ENCODE measurements at regions of chr2 and their contacts with region 1.

Region 1: GRCh38 chr2:201231781-201232466 is 28.4 kb upstream of the CASP8 start:
- DNase-seq: peak; percentile 95
- ATAC-seq: peak; percentile 54
- H3K4me3 Mint-ChIP-seq: peak overlapping the region; percentile 91
- H3K27ac Mint-ChIP-seq: peak overlapping the region; percentile 88
- H3K4me1 Mint-ChIP-seq: peaks cover 46% of the 10 kb centered on the region
- H3K27me3 Mint-ChIP-seq: no peaks in the 10 kb centered on the region
- CTCF ChIP-seq: peak; percentile 93

Region 2: DNA sequence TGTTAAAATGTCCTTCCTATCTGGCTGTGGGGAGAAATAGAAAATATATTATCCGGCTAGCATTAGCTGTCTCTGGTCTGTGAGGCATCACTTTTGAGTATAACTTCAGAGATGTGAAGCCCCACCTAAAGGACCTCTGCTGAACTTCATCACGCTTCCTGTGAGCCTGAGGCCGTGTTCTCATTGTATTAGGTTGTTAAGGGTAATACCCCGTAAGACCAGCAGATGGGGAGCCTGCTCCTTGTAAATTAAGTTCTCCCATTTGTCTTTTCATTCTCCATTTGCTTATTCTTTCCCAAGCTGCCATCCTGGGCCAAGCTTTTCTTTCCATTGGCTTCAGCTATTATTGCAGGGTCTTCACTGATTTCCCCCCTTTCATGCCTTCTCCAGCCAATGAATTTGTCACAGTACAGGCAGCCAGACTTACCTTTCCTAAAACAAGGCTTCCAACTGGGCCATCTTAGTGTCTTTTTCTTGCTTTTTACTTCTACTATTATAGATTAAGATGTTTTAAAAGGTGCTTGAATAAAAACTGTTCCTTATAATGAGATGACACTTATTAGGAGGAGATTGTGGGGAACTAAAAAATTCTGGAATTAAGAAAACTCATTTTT is 330.4 kb before region 1 on chr2:
- CTCF ChIA-PET with region 1: interaction called, 26 read pairs
- POLR2A ChIA-PET with region 1: interaction called, 3 read pairs
- intact Hi-C with region 1: loop called (anchors 5 kb)
- DNase-seq: peak; percentile 90
- ATAC-seq: peak; percentile 100
- H3K4me3 Mint-ChIP-seq: no peak overlapping the region
- H3K27ac Mint-ChIP-seq: peak overlapping the region; percentile 72
- H3K4me1 Mint-ChIP-seq: peaks cover 19% of the 10 kb centered on the region
- H3K27me3 Mint-ChIP-seq: no peaks in the 10 kb centered on the region
- CTCF ChIP-seq: peak; percentile 95

Region 3: GRCh38 chr2:201130524-201131186 is 101.3 kb before region 1 on chr2:
- CTCF ChIA-PET with region 1: interaction called, 7 read pairs
- POLR2A ChIA-PET with region 1: interaction called, 12 read pairs
- intact Hi-C with region 1: no loop called
- DNase-seq: peak; percentile 61
- ATAC-seq: peak; percentile 42
- H3K4me3 Mint-ChIP-seq: peak overlapping the region; percentile 95
- H3K27ac Mint-ChIP-seq: peak overlapping the region; percentile 98
- H3K4me1 Mint-ChIP-seq: peaks cover 55% of the 10 kb centered on the region
- H3K27me3 Mint-ChIP-seq: no peaks in the 10 kb centered on the region
- CTCF ChIP-seq: no peak

Region 4: GRCh38 chr2:201194097-201194496 is 37.8 kb before region 1 on chr2:
- CTCF ChIA-PET with region 1: interaction called, 97 read pairs
- POLR2A ChIA-PET with region 1: interaction called, 6 read pairs
- intact Hi-C with region 1: no loop called
- DNase-seq: no peak
- ATAC-seq: peak; percentile 91
- H3K4me3 Mint-ChIP-seq: peak overlapping the region; percentile 48
- H3K27ac Mint-ChIP-seq: peak overlapping the region; percentile 57
- H3K4me1 Mint-ChIP-seq: peaks cover 63% of the 10 kb centered on the region
- H3K27me3 Mint-ChIP-seq: no peaks in the 10 kb centered on the region
- CTCF ChIP-seq: no peak

Region 5: GRCh38 chr2:201242571-201243277 is 10.8 kb after region 1 on chr2:
- CTCF ChIA-PET with region 1: interaction called, 11 read pairs
- POLR2A ChIA-PET with region 1: interaction called, 3 read pairs
- intact Hi-C with region 1: no loop called
- DNase-seq: no peak
- ATAC-seq: no peak
- H3K4me3 Mint-ChIP-seq: no peak overlapping the region
- H3K27ac Mint-ChIP-seq: no peak overlapping the region
- H3K4me1 Mint-ChIP-seq: peaks cover 38% of the 10 kb centered on the region
- H3K27me3 Mint-ChIP-seq: no peaks in the 10 kb centered on the region
- CTCF ChIP-seq: no peak

Region 6: DNA sequence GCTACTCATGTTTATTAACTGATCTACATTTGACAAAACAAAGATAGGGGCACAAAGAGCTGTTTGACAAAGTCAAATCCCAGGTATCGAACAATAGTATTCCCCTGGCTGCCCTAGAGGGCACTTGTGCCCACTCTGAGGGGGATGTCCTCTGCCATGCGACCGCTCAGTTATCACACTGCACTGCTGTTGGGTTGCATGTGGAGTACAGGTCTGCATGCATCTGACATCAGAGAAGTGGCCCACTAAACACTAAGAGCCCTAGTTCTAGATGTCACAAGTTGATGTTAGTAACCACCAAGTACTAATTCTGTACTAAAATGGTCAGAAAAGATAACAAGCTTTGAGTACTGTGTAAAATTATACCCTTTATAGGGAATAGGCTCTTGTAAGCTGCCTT is 145.3 kb after region 1 on chr2:
- CTCF ChIA-PET with region 1: no interaction called
- POLR2A ChIA-PET with region 1: no interaction called
- intact Hi-C with region 1: no loop called
- DNase-seq: no peak
- ATAC-seq: no peak
- H3K4me3 Mint-ChIP-seq: no peak overlapping the region
- H3K27ac Mint-ChIP-seq: no peak overlapping the region
- H3K4me1 Mint-ChIP-seq: no peaks in the 10 kb centered on the region
- H3K27me3 Mint-ChIP-seq: no peaks in the 10 kb centered on the region
- CTCF ChIP-seq: no peak

Region 7: GRCh38 chr2:201425952-201426351 is 194.0 kb after region 1 on chr2:
- CTCF ChIA-PET with region 1: no interaction called
- POLR2A ChIA-PET with region 1: no interaction called
- intact Hi-C with region 1: no loop called
- DNase-seq: no peak
- ATAC-seq: no peak
- H3K4me3 Mint-ChIP-seq: no peak overlapping the region
- H3K27ac Mint-ChIP-seq: no peak overlapping the region
- H3K4me1 Mint-ChIP-seq: peaks cover 22% of the 10 kb centered on the region
- H3K27me3 Mint-ChIP-seq: no peaks in the 10 kb centered on the region
- CTCF ChIP-seq: no peak

Region 8: GRCh38 chr2:201451292-201452057 is 219.6 kb after region 1 on chr2 and contains the starts of genes STRADB and TRAK2:
- CTCF ChIA-PET with region 1: interaction called, 13 read pairs
- POLR2A ChIA-PET with region 1: interaction called, 3 read pairs
- intact Hi-C with region 1: no loop called
- DNase-seq: peak; percentile 98
- ATAC-seq: peak; percentile 92
- H3K4me3 Mint-ChIP-seq: peak within 1 kb of the TSS; percentile 96
- H3K27ac Mint-ChIP-seq: peak within 1 kb of the TSS; percentile 97
- H3K4me1 Mint-ChIP-seq: peaks cover 42% of the 10 kb centered on the region
- H3K27me3 Mint-ChIP-seq: no peaks in the 10 kb centered on the region
- CTCF ChIP-seq: peak; percentile 45
- total RNA-seq, gene STRADB: 25.5 to 25.9 TPM
- total RNA-seq, gene TRAK2: 19.8 to 22.8 TPM

Measured in activated CD8-positive, alpha-beta T cell treated with anti-CD3 and anti-CD28 coated beads for 36 hours (primary cell).